WTC11 (cell line): ENCODE measurements at regions of chr12 and their contacts with region 1.

Region 1: DNA sequence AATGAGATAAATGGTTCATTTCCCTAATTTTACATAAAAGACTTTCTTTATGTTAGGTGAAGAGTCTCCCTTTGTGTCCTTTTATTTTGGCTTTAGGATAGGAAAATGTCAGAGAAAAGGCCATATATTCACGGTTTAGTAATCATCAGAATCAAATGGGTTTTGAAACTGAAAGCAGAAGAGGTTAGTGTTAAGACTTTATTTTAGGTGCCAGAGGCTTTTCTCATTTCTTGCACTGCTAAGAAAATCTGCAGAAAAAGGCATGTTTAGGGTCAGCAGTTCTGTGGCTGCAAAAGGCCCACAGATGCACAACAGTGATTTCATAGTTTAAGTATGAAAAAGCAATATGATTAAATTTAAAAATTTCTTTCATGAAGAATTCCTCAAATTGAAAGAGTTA is 80.4 kb upstream of the SINHCAF start:
- DNase-seq: no peak
- ATAC-seq: no peak
- H3K4me3 Mint-ChIP-seq: no peak overlapping the region
- H3K27ac Mint-ChIP-seq: 0 out of 2 replicates have a peak overlapping the region, but pooled peaks have one; percentile 12
- H3K4me1 Mint-ChIP-seq: peaks cover 2% of the 10 kb centered on the region
- H3K27me3 Mint-ChIP-seq: no peaks in the 10 kb centered on the region
- CTCF ChIP-seq: no peak

Region 2: DNA sequence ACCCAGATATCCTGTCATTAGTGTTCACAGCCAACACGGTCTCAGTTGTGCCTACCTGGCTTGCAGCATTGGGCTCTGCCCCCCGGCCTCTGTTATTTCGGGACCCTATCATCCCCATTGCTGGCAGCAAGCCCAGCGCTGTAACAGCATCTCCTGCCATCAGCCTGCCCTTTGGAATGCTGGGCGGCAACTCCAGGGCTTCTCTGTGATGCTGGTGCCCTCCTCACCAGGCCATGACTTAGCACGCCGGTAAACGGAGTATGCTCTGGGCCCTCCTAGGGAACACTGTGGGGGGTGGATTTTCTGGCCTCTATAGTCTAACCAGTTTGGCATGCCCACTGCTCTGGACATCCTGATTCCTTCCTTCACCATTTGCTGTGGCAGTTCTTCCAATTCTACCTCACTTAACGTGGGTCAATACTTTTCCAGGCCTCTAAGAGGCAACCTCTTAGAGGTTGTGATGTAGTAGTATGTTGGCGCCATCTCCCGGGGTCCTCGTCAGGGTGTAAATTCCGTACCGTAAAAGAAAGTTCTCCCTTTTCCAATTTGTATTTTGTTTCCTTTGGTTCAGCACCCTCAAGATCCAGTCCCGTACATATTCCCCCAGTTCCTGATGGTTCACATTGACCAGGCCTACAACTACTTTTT is 160.4 kb before region 1 on chr12:
- CTCF ChIA-PET with region 1: interaction called, 12 read pairs
- POLR2A ChIA-PET with region 1: no interaction called
- DNase-seq: no peak
- ATAC-seq: peak; percentile 88
- H3K4me3 Mint-ChIP-seq: no peak overlapping the region
- H3K27ac Mint-ChIP-seq: peak overlapping the region; percentile 25; the same call in 1 of the 2 replicates
- H3K4me1 Mint-ChIP-seq: peaks cover 12% of the 10 kb centered on the region
- H3K27me3 Mint-ChIP-seq: no peaks in the 10 kb centered on the region
- CTCF ChIP-seq: no peak

Region 3: DNA sequence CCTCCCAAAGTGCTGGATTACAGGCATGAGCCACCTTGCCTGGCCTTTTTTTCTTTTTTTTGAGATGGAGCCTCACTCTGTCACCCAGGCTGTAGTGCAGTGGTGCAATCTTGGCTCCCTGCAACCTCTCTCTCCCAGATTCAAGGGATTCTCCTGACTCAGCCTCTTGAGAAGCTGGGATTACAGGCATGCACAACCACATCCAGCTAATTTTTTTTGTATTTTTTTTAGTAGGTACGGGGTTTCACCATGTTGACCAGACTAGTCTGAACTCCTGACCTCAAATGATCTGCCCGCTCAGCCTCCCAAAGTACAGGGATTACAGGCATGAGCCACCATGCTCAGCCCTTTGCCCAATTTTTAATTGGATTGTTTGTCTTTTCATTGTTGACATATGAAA is 138.4 kb before region 1 on chr12:
- CTCF ChIA-PET with region 1: interaction called, 10 read pairs
- POLR2A ChIA-PET with region 1: no interaction called
- DNase-seq: no peak
- ATAC-seq: no peak
- H3K4me3 Mint-ChIP-seq: no peak overlapping the region
- H3K27ac Mint-ChIP-seq: no peak overlapping the region
- H3K4me1 Mint-ChIP-seq: peaks cover 19% of the 10 kb centered on the region
- H3K27me3 Mint-ChIP-seq: no peaks in the 10 kb centered on the region
- CTCF ChIP-seq: no peak

Region 4: GRCh38 chr12:31387466-31387865 is 18.9 kb before region 1 on chr12:
- CTCF ChIA-PET with region 1: interaction called, 11 read pairs
- POLR2A ChIA-PET with region 1: no interaction called
- DNase-seq: no peak
- ATAC-seq: peak; percentile 7
- H3K4me3 Mint-ChIP-seq: peak overlapping the region; percentile 69
- H3K27ac Mint-ChIP-seq: peak overlapping the region; percentile 99
- H3K4me1 Mint-ChIP-seq: peaks cover 79% of the 10 kb centered on the region
- H3K27me3 Mint-ChIP-seq: no peaks in the 10 kb centered on the region
- CTCF ChIP-seq: no peak

Region 5: GRCh38 chr12:31631784-31632183 is 225.4 kb after region 1 on chr12:
- CTCF ChIA-PET with region 1: interaction called, 19 read pairs
- POLR2A ChIA-PET with region 1: no interaction called
- DNase-seq: no peak
- ATAC-seq: no peak
- H3K4me3 Mint-ChIP-seq: no peak overlapping the region
- H3K27ac Mint-ChIP-seq: no peak overlapping the region
- H3K4me1 Mint-ChIP-seq: peaks cover 7% of the 10 kb centered on the region
- H3K27me3 Mint-ChIP-seq: no peaks in the 10 kb centered on the region
- CTCF ChIP-seq: no peak

Region 6: GRCh38 chr12:31641509-31642090 is 235.3 kb after region 1 on chr12:
- CTCF ChIA-PET with region 1: interaction called, 19 read pairs
- POLR2A ChIA-PET with region 1: no interaction called
- DNase-seq: no peak
- ATAC-seq: no peak
- H3K4me3 Mint-ChIP-seq: no peak overlapping the region
- H3K27ac Mint-ChIP-seq: no peak overlapping the region
- H3K4me1 Mint-ChIP-seq: peaks cover 1% of the 10 kb centered on the region; the same call in 1 of the 2 replicates
- H3K27me3 Mint-ChIP-seq: no peaks in the 10 kb centered on the region
- CTCF ChIP-seq: no peak

Region 7: DNA sequence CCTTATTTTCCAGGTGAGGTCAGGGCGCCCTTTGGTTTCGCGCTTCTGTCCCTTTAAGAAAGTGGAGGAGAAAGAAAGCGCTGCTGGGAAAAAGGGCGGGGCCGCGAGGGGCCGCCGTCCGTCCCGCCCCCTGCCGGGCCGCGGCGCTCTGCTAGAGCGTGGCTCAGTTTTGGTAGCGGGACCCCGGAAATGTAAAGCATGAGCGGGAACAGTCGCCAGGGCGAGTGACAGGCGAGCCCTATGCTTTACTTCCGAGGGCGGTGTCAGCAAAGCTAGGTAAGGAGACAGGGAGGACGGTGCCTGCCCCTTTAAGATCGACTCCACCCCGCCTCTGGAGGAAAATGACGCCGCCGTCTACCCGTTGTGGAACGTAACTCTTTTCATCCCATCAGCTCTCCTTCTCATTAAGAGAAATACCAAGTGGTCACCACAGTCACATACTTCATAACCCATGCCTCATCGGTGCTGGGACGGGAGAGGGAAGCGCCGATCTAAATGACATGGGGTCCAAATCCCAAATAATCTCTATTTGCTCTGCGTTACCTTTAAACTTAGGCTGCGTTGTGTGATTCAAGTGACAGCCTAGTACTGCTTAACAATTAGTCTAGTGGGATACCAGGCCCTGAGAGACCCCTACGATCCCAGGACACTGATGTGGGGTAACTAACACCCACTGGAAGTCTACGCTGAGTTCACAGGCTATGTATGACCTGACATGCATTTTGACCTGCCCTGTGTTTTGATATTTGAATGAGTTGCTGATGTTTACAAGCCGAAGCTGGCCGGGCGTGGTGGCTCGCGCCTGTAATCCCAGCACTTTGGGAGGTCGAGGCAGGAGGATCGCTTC is 253.0 kb after region 1 on chr12 and contains the start of gene ETFBKMT:
- CTCF ChIA-PET with region 1: interaction called, 11 read pairs
- POLR2A ChIA-PET with region 1: no interaction called
- DNase-seq: peak; percentile 84
- ATAC-seq: peak; percentile 98
- H3K4me3 Mint-ChIP-seq: peak within 1 kb of the TSS; percentile 96
- H3K27ac Mint-ChIP-seq: peak within 1 kb of the TSS; percentile 98
- H3K4me1 Mint-ChIP-seq: peaks cover 8% of the 10 kb centered on the region; the same call in 1 of the 2 replicates
- H3K27me3 Mint-ChIP-seq: no peaks in the 10 kb centered on the region
- CTCF ChIP-seq: no peak
- total RNA-seq, gene ETFBKMT: 2.0 to 2.2 TPM (median 2.1 TPM) in 3 replicates